ENCODE measurements at regions of chr11 and their contacts with region 1.

Region 1: GRCh38 chr11:114400217-114400914 is at the starts of genes C11orf71 and RBM7:
- DNase-seq: peak; percentile 98
- H3K4me3 Mint-ChIP-seq: peak within 1 kb of the TSS; percentile 97
- H3K27ac Mint-ChIP-seq: peak within 1 kb of the TSS; percentile 99
- H3K4me1 Mint-ChIP-seq: peaks cover 48% of the 10 kb centered on the region
- H3K27me3 Mint-ChIP-seq: no peaks in the 10 kb centered on the region
- total RNA-seq, gene C11orf71: 5.0 to 5.5 TPM
- total RNA-seq, gene RBM7: 44.0 to 45.4 TPM

Region 2: GRCh38 chr11:113875234-113876073 is 524.9 kb before region 1 on chr11 and contains the start of gene USP28:
- CTCF ChIA-PET with region 1: no interaction called
- POLR2A ChIA-PET with region 1: no interaction called
- intact Hi-C with region 1: loop called (anchors 5 kb)
- DNase-seq: peak; percentile 87
- H3K4me3 Mint-ChIP-seq: peak within 1 kb of the TSS; percentile 94
- H3K27ac Mint-ChIP-seq: peak within 1 kb of the TSS; percentile 84
- H3K4me1 Mint-ChIP-seq: peaks cover 32% of the 10 kb centered on the region
- H3K27me3 Mint-ChIP-seq: no peaks in the 10 kb centered on the region
- total RNA-seq, gene USP28: 30.6 to 41.7 TPM

Region 3: GRCh38 chr11:114340311-114341131 is 59.8 kb before region 1 on chr11:
- CTCF ChIA-PET with region 1: no interaction called
- POLR2A ChIA-PET with region 1: no interaction called
- intact Hi-C with region 1: no loop called
- DNase-seq: peak; percentile 41
- H3K4me3 Mint-ChIP-seq: no peak overlapping the region
- H3K27ac Mint-ChIP-seq: no peak overlapping the region
- H3K4me1 Mint-ChIP-seq: peaks cover 3% of the 10 kb centered on the region
- H3K27me3 Mint-ChIP-seq: no peaks in the 10 kb centered on the region

Region 4: DNA sequence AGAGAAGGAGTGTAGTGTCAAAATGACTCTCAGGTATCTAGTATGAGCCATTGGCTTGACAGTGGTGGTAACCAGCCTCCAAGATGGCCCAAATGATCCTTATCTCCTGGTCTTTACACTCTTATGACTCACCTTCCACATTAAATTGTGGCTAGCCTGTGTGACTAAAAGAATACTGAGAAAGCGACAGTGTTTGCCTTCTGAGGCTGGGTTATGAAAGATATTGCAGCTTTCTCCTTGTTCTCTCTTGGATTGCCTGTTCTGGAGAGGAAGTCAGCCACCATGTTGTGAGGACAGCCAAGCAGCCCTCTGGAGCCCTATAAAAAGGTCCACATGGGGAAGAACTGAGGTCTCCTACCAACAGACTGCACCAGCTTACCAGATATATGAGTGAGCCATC is 15.9 kb before region 1 on chr11:
- CTCF ChIA-PET with region 1: no interaction called
- POLR2A ChIA-PET with region 1: no interaction called
- intact Hi-C with region 1: no loop called
- DNase-seq: no peak
- H3K4me3 Mint-ChIP-seq: no peak overlapping the region
- H3K27ac Mint-ChIP-seq: no peak overlapping the region
- H3K4me1 Mint-ChIP-seq: no peaks in the 10 kb centered on the region
- H3K27me3 Mint-ChIP-seq: peaks cover 3% of the 10 kb centered on the region

Region 5: DNA sequence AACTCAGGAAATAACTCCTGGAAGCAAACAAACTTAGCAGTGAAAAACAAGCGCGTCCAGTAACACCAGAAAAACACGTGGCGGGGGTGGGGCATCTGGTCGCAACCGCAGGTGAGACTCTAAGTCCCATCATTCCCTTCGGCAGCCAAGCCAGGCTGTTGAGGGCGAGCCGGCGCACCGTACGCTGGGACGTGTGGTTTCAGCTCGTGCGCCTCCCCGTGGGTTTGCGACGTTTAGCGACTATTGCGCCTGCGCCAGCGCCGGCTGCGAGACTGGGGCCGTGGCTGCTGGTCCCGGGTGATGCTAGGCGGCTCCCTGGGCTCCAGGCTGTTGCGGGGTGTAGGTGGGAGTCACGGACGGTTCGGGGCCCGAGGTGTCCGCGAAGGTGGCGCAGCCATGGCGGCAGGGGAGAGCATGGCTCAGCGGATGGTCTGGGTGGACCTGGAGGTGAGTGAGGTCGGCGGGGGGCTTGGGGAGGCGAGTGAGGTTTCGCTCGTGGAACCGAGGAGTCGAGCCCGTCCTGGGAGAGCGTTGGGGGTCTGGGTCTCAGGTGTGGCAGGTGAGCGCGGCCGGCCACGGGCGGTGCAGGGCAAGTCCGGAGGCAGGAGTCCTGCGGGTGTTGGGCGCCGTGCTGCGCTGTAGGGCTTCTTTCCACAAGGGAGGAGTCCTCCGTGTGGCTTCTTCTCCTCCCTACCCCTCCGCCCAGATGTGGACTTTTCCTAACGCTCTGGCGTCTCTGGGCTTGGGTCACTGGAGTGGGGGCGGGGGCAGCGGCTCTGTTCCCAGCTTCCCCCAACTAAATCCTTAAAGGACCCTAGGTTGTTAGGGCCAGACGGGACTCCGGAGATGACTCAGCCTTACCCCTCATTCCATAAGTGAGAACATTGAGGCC is 39.1 kb after region 1 on chr11 and contains the start of gene REXO2:
- CTCF ChIA-PET with region 1: interaction called, 3 read pairs
- POLR2A ChIA-PET with region 1: interaction called, 3 read pairs
- intact Hi-C with region 1: loop called (anchors 1 kb)
- DNase-seq: peak; percentile 96
- H3K4me3 Mint-ChIP-seq: peak within 1 kb of the TSS; percentile 97
- H3K27ac Mint-ChIP-seq: peak within 1 kb of the TSS; percentile 85
- H3K4me1 Mint-ChIP-seq: peaks cover 31% of the 10 kb centered on the region
- H3K27me3 Mint-ChIP-seq: no peaks in the 10 kb centered on the region
- total RNA-seq, gene REXO2: 60.1 to 62.0 TPM

Measured in activated CD4-positive, alpha-beta memory T cell treated with anti-CD3 and anti-CD28 coated beads for 36 hours (primary cell).